PC-9 (cell line): ENCODE measurements at regions of chr7 and their contacts with region 1.

Region 1: GRCh38 chr7:55065079-55065478 is 46.3 kb downstream of the EGFR start:
- DNase-seq: peak; percentile 78 to 96
- H3K4me3 ChIP-seq: peak overlapping the region; percentile 27
- H3K27ac ChIP-seq: peak overlapping the region; percentile 96
- H3K4me1 ChIP-seq: peaks cover 58% of the 10 kb centered on the region
- H3K27me3 ChIP-seq: no peaks in the 10 kb centered on the region
- CTCF ChIP-seq: no peak

Region 2: DNA sequence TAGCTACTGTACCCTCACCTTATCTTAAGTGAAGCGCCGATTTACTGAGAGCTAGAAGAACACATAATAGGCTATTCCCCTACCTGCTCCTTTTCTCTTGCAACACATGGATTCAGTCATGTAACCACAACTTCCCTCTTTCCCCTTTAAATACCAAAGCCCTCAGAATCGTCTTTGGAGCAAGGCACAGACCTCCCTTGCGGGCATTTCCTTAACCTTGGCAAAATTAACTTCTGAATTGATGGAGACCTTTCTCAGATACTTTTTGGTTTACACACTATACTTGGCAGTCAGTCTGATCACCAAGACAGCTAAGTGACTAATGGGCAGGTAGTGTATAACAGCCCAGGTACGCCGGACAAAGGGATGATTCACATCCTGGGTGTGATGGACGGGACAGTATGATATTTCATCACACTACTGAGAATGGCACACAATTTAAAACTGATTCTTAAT is 233.4 kb before region 1 on chr7:
- CTCF ChIA-PET with region 1: no interaction called
- POLR2A ChIA-PET with region 1: no interaction called
- intact Hi-C with region 1: loop called (anchors 1 kb)
- DNase-seq: peak; percentile 86 to 100
- H3K4me3 ChIP-seq: peak overlapping the region; percentile 39; the same call in 1 of the 2 replicates
- H3K27ac ChIP-seq: peak overlapping the region; percentile 94
- H3K4me1 ChIP-seq: peaks cover 45% of the 10 kb centered on the region
- H3K27me3 ChIP-seq: no peaks in the 10 kb centered on the region
- CTCF ChIP-seq: no peak; the same call in none of the 2 replicates

Region 3: GRCh38 chr7:54869513-54869912 is 195.6 kb before region 1 on chr7:
- CTCF ChIA-PET with region 1: no interaction called
- POLR2A ChIA-PET with region 1: no interaction called
- intact Hi-C with region 1: no loop called
- DNase-seq: no peak
- H3K4me3 ChIP-seq: no peak overlapping the region
- H3K27ac ChIP-seq: no peak overlapping the region
- H3K4me1 ChIP-seq: peaks cover 9% of the 10 kb centered on the region; the same call in 1 of the 2 replicates
- H3K27me3 ChIP-seq: no peaks in the 10 kb centered on the region
- CTCF ChIP-seq: no peak

Region 4: DNA sequence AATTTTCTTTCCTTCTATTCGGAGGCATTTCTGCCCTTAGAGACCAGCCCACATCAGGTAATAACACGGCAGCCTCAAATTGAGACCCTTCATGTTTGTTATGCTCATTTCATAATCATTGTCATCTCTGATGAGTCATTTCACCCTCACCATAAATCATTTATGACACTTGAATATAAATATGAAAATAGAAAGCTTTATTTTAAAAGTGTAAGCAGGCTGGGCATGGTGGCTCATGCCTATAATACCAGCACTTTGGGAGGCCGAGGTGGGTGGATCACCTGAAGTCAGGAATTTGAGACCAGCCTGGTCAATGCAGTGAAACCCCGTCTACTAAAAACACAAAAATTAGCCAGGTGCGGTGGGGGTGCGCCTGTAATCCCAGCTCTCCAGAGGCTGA is 103.7 kb before region 1 on chr7:
- CTCF ChIA-PET with region 1: no interaction called
- POLR2A ChIA-PET with region 1: interaction called, 10 read pairs
- intact Hi-C with region 1: no loop called
- DNase-seq: peak; percentile 88 to 98
- H3K4me3 ChIP-seq: peak overlapping the region; percentile 12; the same call in 1 of the 2 replicates
- H3K27ac ChIP-seq: peak overlapping the region; percentile 71
- H3K4me1 ChIP-seq: peaks cover 34% of the 10 kb centered on the region
- H3K27me3 ChIP-seq: no peaks in the 10 kb centered on the region
- CTCF ChIP-seq: no peak

Region 5: GRCh38 chr7:55032069-55032699 is 32.9 kb before region 1 on chr7:
- CTCF ChIA-PET with region 1: interaction called, 13 read pairs
- POLR2A ChIA-PET with region 1: no interaction called
- intact Hi-C with region 1: no loop called
- DNase-seq: no peak
- H3K4me3 ChIP-seq: no peak overlapping the region
- H3K27ac ChIP-seq: peak overlapping the region; percentile 31
- H3K4me1 ChIP-seq: peaks cover 59% of the 10 kb centered on the region
- H3K27me3 ChIP-seq: no peaks in the 10 kb centered on the region
- CTCF ChIP-seq: no peak

Region 6: GRCh38 chr7:55110661-55111361 is 45.7 kb after region 1 on chr7:
- CTCF ChIA-PET with region 1: no interaction called
- POLR2A ChIA-PET with region 1: no interaction called
- intact Hi-C with region 1: loop called (anchors 1 kb)
- DNase-seq: peak; percentile 68 to 71
- H3K4me3 ChIP-seq: no peak overlapping the region
- H3K27ac ChIP-seq: peak overlapping the region; percentile 2; the same call in 1 of the 2 replicates
- H3K4me1 ChIP-seq: peaks cover 50% of the 10 kb centered on the region
- H3K27me3 ChIP-seq: no peaks in the 10 kb centered on the region
- CTCF ChIP-seq: no peak

Region 7: DNA sequence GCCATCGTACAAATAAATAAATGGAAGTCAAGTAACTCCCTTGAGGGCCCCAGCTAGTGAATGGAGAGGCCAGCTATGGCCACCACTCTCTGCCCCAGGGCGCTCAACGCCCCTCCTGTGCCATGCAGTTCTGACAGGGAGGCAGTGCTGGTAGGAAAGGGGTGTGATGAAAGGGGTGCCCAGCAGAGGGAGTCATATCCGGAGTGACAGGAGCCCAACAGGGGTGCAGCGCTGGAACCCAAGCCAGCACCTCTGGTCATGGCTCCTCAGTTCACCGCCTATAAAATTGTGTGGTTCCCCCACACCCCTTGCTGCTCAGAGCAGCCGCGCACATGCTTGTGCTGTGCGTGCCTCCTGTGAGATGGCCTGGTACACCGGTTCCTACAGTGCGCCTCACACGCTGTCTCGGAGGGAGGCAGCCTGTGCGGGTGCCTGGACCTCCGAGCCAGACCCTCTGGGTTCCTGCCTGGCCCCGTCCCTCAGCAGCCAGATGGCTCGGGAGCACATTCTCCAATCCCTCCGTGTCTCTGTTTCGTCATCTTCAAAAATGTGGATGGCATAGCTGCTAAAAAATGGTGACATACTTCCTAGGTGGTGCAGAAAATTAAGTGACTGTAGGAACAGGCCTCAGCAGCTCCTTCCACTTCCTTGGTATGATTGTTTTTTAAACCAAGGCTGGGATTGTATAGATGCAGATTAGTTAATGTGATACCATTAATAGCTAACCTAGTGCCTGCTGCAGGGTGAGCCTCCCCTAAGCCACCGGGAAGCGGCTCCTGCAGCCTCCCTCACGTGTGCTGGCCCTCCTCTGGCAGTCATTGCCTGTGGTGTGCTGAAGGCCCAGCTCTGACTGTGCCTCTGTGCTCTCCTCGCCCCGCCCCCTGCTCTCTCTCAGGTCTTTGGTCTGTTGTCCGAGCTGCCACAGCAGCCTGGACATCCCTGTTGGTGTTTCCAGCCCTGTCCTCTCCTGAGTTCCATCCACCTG is 79.5 kb after region 1 on chr7:
- CTCF ChIA-PET with region 1: no interaction called
- POLR2A ChIA-PET with region 1: interaction called, 26 read pairs
- intact Hi-C with region 1: no loop called
- DNase-seq: peak in 1 of 2 experiments; percentile 29
- H3K4me3 ChIP-seq: no peak overlapping the region
- H3K27ac ChIP-seq: no peak overlapping the region
- H3K4me1 ChIP-seq: no peaks in the 10 kb centered on the region
- H3K27me3 ChIP-seq: no peaks in the 10 kb centered on the region
- CTCF ChIP-seq: peak; percentile 60

Region 8: DNA sequence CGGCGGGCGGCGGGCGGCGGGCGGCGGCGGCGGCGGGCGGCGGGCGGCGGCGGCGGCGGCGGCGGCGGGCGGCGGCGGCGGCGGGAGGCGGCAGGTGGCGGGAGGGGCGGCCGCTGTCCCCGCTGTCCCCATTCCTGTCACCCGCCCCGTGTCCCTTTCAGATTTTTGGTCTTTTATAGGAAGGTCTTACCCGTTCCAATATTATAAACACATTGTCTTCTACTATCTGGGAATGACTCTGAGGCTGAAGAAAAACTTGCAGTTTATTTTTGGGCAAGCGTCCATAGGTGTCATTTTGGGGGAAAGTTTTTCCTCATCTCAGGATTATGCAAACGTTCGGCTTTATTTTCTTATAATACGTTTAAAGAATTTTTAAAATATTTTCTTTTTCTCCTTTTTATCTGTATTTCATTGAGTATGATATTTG is 822.8 kb after region 1 on chr7:
- CTCF ChIA-PET with region 1: no interaction called
- POLR2A ChIA-PET with region 1: interaction called, 24 read pairs
- intact Hi-C with region 1: no loop called
- DNase-seq: peak in 1 of 2 experiments; percentile 29
- H3K4me3 ChIP-seq: peak overlapping the region; percentile 79
- H3K27ac ChIP-seq: peak overlapping the region; percentile 47; the same call in 1 of the 2 replicates
- H3K4me1 ChIP-seq: peaks cover 11% of the 10 kb centered on the region
- H3K27me3 ChIP-seq: no peaks in the 10 kb centered on the region
- CTCF ChIP-seq: 0 out of 2 replicates have a peak, but pooled peaks have one; percentile 15